Panc1 (cell line): ENCODE measurements at regions of chr13 and their contacts with region 1.

Region 1: DNA sequence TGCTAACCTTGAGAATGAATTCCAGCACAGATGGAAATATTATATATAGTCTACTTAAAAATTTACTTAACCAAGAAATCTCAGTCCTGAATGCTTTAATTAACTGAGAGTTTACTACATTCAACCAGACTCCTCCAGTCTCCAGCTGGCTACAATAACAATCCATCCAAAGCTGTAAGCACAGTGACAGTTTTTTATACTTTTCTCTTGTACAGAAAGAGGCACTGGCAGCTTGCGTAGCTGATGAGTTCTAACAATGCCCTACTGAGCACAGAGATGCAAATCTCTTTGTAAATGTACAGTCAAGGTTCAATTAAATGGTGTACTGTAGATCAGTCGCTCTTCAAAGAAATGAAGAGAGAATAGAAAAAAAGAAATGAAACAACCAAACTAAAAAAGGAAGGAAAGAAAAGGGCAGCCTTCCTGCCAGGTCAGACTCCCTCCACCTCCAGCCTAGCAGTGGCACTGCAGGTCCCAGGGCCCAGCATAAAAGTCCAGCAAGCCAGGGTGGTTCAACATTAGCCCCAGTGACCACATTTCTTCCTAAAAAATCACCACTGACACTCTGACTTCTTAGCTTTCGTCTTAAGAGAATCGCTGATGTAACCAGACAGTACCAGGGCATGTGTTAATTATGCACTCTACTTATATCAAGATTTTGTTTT is 88.4 kb downstream of the SACS start:
- DNase-seq: no peak
- ATAC-seq: no peak
- H3K4me3 ChIP-seq: no peak overlapping the region
- H3K27ac ChIP-seq: no peak overlapping the region
- H3K4me1 ChIP-seq: no peaks in the 10 kb centered on the region
- H3K27me3 ChIP-seq: no peaks in the 10 kb centered on the region
- CTCF ChIP-seq: no peak

Region 2: GRCh38 chr13:24706886-24707585 is 1362.0 kb after region 1 on chr13:
- CTCF ChIA-PET with region 1: no interaction called
- POLR2A ChIA-PET with region 1: interaction called, 15 read pairs
- in situ Hi-C with region 1: no loop called
- intact Hi-C with region 1: no loop called
- DNase-seq: no peak
- ATAC-seq: no peak
- H3K4me3 ChIP-seq: no peak overlapping the region
- H3K27ac ChIP-seq: no peak overlapping the region
- H3K4me1 ChIP-seq: no peaks in the 10 kb centered on the region
- H3K27me3 ChIP-seq: no peaks in the 10 kb centered on the region
- CTCF ChIP-seq: no peak